PC-3 (cell line): ENCODE measurements at regions of chr18 and their contacts with region 1.

Region 1: DNA sequence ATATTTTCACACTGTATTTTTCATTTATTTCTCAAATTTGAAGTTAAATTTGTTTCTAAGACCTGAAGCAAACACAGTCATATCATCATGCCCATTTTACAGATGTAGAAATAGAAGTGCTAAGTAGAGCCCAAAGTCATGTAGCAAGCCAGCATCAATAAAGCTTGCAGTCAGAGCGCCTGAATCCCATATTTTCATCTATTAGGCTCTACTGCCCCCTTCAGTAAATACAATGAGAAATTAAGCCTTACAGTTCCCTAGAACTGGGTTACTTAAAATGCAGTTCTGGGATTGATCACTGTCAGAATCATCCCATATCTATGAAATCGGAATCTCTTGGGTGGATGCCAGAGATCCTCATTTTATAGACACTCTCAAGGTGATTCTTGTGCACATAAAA is 419.9 kb downstream of the TGIF1 start:
- DNase-seq: peak; percentile 72
- ATAC-seq: peak; percentile 74
- H3K4me3 ChIP-seq: no peak overlapping the region
- H3K27ac ChIP-seq: no peak overlapping the region
- H3K4me1 ChIP-seq: no peaks in the 10 kb centered on the region
- H3K27me3 ChIP-seq: peaks cover 48% of the 10 kb centered on the region
- CTCF ChIP-seq: peak; percentile 76

Region 2: DNA sequence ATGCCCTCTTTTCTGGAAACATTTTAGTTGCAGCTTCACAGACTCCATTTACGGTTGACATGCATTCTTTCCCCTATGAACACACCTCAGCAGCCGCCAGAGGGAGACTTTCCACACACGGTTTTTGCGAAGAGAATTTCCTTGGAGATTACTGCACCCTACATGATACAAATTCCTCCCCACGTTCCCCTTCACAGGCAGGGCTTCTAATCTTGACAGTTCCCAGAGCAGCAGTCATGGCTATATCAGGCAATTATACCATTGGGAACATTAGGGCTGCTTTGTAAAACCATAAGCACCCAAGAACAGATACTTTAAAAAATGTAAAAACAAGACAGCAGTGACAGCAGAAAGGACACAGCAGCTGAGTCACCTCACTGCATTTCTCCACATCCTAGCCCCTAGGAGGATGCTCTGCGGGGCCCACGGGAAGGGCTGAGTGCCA is 166.1 kb before region 1 on chr18:
- CTCF ChIA-PET with region 1: interaction called, 4 read pairs
- POLR2A ChIA-PET with region 1: no interaction called
- intact Hi-C with region 1: loop called (anchors 1 kb)
- DNase-seq: peak; percentile 71
- ATAC-seq: peak; percentile 92
- H3K4me3 ChIP-seq: no peak overlapping the region
- H3K27ac ChIP-seq: no peak overlapping the region
- H3K4me1 ChIP-seq: no peaks in the 10 kb centered on the region
- H3K27me3 ChIP-seq: peaks cover 21% of the 10 kb centered on the region
- CTCF ChIP-seq: peak; percentile 92

Region 3: DNA sequence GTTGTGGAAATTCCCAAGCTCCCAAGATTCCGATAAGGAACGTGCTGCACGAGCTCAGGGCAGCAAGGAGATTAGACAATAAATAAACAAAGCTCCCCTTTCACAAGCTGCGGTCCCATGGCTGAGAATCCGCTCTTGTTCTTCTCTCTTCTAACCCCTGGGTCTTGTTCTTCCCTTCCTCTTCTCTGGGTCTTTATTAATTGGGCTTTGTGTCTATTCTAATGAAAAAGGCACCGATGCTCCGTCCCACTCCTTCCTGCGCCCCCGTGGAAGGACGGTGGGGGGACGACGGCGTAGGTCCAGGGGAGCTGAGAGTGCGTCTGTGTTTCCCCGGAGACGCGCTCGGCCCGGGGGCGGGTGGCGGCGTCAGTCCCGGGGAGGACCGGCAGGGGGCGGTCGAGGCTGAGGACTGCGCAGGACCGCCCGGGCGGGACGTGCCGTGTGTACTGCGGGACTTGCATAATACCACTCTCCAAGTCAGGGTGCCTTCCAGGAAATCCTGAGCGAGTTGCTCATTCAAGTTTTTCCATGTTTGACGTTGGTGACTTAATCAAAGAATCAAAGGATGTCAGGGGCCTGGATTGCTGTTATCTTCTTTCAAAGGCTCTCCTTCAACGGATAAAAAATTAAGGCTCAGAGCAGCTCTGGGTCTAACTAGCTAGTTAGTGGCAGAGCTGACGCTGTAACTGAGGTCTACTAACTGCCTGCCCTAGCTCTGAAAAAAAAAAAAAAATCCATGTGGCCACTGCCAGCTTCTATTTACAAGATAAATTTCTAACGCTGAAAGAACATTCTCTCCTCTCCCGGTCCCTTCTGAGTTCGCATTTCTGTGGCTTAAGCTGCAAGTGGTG is 98.5 kb before region 1 on chr18:
- CTCF ChIA-PET with region 1: interaction called, 15 read pairs
- POLR2A ChIA-PET with region 1: no interaction called
- intact Hi-C with region 1: loop called (anchors 1 kb)
- DNase-seq: peak; percentile 80
- ATAC-seq: peak; percentile 95
- H3K4me3 ChIP-seq: peak overlapping the region; percentile 49
- H3K27ac ChIP-seq: no peak overlapping the region
- H3K4me1 ChIP-seq: peaks cover 21% of the 10 kb centered on the region
- H3K27me3 ChIP-seq: peaks cover 27% of the 10 kb centered on the region; the same call in 1 of the 2 replicates
- CTCF ChIP-seq: peak; percentile 88